Naive thymus-derived CD4-positive, alpha-beta T cell (primary cell): ENCODE measurements at regions of chr1 and their contacts with region 1.

Region 1: GRCh38 chr1:70288166-70288565 is 66.4 kb downstream of the ANKRD13C start:
- DNase-seq: no peak
- ATAC-seq: no peak
- H3K4me3 ChIP-seq: no peak overlapping the region
- H3K4me3 Mint-ChIP-seq: no peak overlapping the region
- H3K27ac ChIP-seq: no peak overlapping the region
- H3K27ac Mint-ChIP-seq: peak overlapping the region in 1 of 9 donors; percentile 20
- H3K4me1 ChIP-seq: no peaks in the 10 kb centered on the region
- H3K4me1 Mint-ChIP-seq: peaks cover 0 to 1% (median 0%) of the 10 kb centered on the region in 7 donors
- H3K27me3 ChIP-seq: no peaks in the 10 kb centered on the region
- H3K27me3 Mint-ChIP-seq: no peaks in the 10 kb centered on the region

Region 2: GRCh38 chr1:70331962-70332361 is 43.8 kb after region 1 on chr1:
- CTCF ChIA-PET with region 1: no interaction called
- POLR2A ChIA-PET with region 1: no interaction called
- intact Hi-C with region 1: loop called in 1 of 2 experiments (anchors 10 kb)
- DNase-seq: no peak
- ATAC-seq: no peak
- H3K4me3 ChIP-seq: no peak overlapping the region
- H3K4me3 Mint-ChIP-seq: no peak overlapping the region
- H3K27ac ChIP-seq: no peak overlapping the region
- H3K27ac Mint-ChIP-seq: no peak overlapping the region
- H3K4me1 ChIP-seq: no peaks in the 10 kb centered on the region
- H3K4me1 Mint-ChIP-seq: peaks cover 14 to 50% (median 37%) of the 10 kb centered on the region in 7 donors
- H3K27me3 ChIP-seq: no peaks in the 10 kb centered on the region
- H3K27me3 Mint-ChIP-seq: no peaks in the 10 kb centered on the region